ENCODE measurements at regions of chr15 and their contacts with region 1.

Region 1: DNA sequence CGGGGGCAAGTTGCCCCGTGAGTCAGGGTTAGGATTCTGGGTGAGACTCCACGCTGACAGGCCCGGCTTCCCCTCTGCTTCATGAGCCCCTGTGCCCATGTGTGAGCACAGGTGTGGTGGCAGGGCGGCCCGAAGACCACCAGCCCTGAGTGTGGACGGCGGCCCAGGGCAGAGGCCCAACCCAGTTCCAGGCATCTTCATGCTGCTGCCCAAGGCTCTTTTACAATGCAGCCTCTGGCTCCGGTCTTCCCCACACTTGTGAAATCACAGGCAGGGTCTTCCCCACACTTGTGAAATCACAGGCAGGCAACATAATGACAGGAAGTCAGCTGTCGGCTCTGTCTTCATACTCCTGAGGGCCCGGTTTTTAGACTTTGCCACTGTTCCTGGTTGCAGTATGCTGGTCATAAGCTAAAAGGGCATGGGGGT is 78.8 kb downstream of the AAGAB start:
- DNase-seq: peak in 1 of 3 donors; percentile 44
- ATAC-seq: peak; percentile 20 to 72 (median 56)
- H3K4me3 ChIP-seq: no peak overlapping the region
- H3K27ac ChIP-seq: no peak overlapping the region
- H3K4me1 ChIP-seq: no peaks in the 10 kb centered on the region
- H3K27me3 ChIP-seq: no peaks in the 10 kb centered on the region
- CTCF ChIP-seq: no peak
- POLR2A ChIP-seq: no peak

Region 2: GRCh38 chr15:67076147-67076843 is 99.4 kb before region 1 on chr15:
- intact Hi-C with region 1: loop called in 1 of 2 experiments (anchors 10 kb)
- DNase-seq: no peak
- ATAC-seq: peak in 1 of 4 donors; percentile 20
- H3K4me3 ChIP-seq: no peak overlapping the region
- H3K27ac ChIP-seq: no peak overlapping the region
- H3K4me1 ChIP-seq: peaks cover 0 to 39% (median 7%) of the 10 kb centered on the region in 4 donors
- H3K27me3 ChIP-seq: no peaks in the 10 kb centered on the region
- CTCF ChIP-seq: no peak
- POLR2A ChIP-seq: no peak

Measured in right lobe of liver (tissue), 6 donors.